ENCODE measurements at regions of chr19 and their contacts with region 1.

Region 1: GRCh38 chr19:55301459-55302317 is 17.9 kb downstream of the BRSK1 start:
- DNase-seq: peak; percentile 89 to 99 (median 94)
- ATAC-seq: peak; percentile 88
- H3K4me3 ChIP-seq: peak overlapping the region; percentile 46 to 83
- H3K4me3 Mint-ChIP-seq: peak overlapping the region; percentile 85
- H3K27ac ChIP-seq: peak overlapping the region; percentile 48 to 54
- H3K27ac Mint-ChIP-seq: peak overlapping the region; percentile 92
- H3K4me1 ChIP-seq: peaks cover 11% of the 10 kb centered on the region
- H3K4me1 Mint-ChIP-seq: peaks cover 12% of the 10 kb centered on the region
- H3K27me3 ChIP-seq: no peaks in the 10 kb centered on the region
- H3K27me3 Mint-ChIP-seq: no peaks in the 10 kb centered on the region
- CTCF ChIP-seq: peak; percentile 89

Region 2: DNA sequence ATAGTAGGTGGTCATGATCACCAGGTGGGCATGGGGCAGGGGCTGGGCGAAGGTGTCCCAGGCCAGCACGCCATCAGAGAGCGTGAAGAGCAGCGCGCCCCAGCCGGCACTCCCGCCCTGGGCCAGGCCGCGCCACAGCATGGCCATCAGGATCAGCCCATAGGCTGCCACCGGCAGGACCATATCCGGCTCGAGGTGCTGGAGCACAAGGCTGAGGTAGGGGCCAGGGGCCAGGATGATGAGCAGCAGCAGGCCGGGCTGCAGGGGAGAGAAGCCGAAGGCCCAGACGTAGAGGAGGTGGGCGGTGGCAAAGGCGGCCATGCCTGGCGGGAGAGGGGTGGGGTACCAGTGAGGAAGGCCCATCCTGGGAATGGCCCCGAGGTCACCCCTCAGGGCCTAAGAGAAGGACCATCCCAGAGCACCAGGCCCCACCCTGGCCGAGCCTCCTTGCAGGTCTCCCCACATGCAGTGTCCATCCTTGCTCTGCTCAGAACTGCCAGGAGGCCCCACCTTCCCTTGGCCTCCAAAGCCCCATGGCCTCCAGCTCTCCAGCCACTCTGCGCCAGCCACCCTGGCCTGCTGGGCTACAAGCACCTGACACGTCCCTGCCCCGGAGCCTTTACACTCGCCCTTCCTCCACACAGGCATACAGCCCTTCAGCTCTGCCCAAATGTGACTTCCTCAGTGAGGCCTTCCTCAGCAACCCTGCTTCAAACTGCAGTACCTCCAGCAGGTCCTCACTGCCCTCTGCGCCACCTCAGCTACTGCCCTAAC is 74.3 kb before region 1 on chr19:
- CTCF ChIA-PET with region 1: no interaction called
- POLR2A ChIA-PET with region 1: no interaction called
- intact Hi-C with region 1: no loop called
- DNase-seq: no peak
- ATAC-seq: no peak
- H3K4me3 ChIP-seq: no peak overlapping the region
- H3K4me3 Mint-ChIP-seq: no peak overlapping the region
- H3K27ac ChIP-seq: no peak overlapping the region
- H3K27ac Mint-ChIP-seq: no peak overlapping the region
- H3K4me1 ChIP-seq: no peaks in the 10 kb centered on the region
- H3K4me1 Mint-ChIP-seq: peaks cover 5% of the 10 kb centered on the region
- H3K27me3 ChIP-seq: no peaks in the 10 kb centered on the region
- H3K27me3 Mint-ChIP-seq: no peaks in the 10 kb centered on the region
- CTCF ChIP-seq: no peak

Region 3: GRCh38 chr19:55279770-55280643 is 21.7 kb before region 1 on chr19 and contains the start of gene HSPBP1:
- CTCF ChIA-PET with region 1: interaction called, 13 read pairs
- POLR2A ChIA-PET with region 1: no interaction called
- intact Hi-C with region 1: loop called in 1 of 2 experiments (anchors 2 kb)
- DNase-seq: peak; percentile 87 to 98 (median 95)
- ATAC-seq: peak; percentile 86
- H3K4me3 ChIP-seq: peak within 1 kb of the TSS; percentile 73 to 85
- H3K4me3 Mint-ChIP-seq: peak within 1 kb of the TSS; percentile 96
- H3K27ac ChIP-seq: peak within 1 kb of the TSS; percentile 89 to 90
- H3K27ac Mint-ChIP-seq: peak within 1 kb of the TSS; percentile 98
- H3K4me1 ChIP-seq: peaks cover 32% of the 10 kb centered on the region
- H3K4me1 Mint-ChIP-seq: peaks cover 44% of the 10 kb centered on the region
- H3K27me3 ChIP-seq: no peaks in the 10 kb centered on the region
- H3K27me3 Mint-ChIP-seq: no peaks in the 10 kb centered on the region
- CTCF ChIP-seq: no peak
- total RNA-seq, gene HSPBP1: 18.8 to 18.9 TPM

Region 4: DNA sequence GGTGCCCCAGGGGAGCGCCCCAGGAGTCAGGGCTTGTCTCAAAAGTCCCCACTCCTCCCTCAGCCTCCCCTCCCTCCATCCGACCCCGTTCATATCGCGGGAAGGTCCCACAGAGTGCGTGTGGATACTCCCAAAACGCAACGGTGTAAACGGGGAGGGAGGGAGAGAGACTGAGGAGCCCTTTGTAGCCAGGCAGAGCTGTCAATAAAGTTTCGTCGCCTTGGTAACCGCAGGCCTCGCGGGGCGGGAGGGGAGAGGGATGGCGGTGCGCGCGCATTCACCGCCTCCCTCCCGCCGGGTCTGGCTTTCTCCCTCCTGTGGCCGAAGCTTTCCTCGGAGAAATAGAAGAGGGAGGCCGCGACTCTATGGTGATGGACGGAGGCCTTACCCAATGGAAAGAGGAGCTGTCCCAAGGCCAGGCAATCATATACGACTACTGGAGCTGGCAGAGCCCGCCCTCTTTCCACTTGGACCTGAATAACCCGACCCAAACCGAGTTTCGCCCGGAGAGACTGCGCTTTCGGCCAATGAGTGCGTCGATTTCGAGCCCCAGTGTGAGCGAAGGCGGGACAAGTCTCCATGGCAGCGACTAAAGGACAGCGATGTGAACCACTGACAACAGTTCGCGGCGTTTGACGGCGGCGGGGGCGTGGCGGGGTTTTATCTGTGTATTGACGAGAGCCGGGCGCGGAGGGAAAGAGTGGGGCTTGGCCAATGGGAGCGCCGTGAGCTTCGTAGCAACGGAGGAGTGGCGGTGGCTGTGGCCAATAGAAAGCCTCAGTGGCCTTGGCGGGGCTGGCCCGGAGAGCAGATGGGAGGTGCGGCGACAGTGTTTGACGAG is 37.6 kb after region 1 on chr19 and contains the start of gene KMT5C:
- CTCF ChIA-PET with region 1: interaction called, 7 read pairs
- POLR2A ChIA-PET with region 1: interaction called, 12 read pairs
- intact Hi-C with region 1: loop called (anchors 1 to 2 kb)
- DNase-seq: peak; percentile 100
- ATAC-seq: peak; percentile 75
- H3K4me3 ChIP-seq: peak within 1 kb of the TSS; percentile 67 to 80
- H3K4me3 Mint-ChIP-seq: peak within 1 kb of the TSS; percentile 94
- H3K27ac ChIP-seq: peak within 1 kb of the TSS; percentile 94 to 100
- H3K27ac Mint-ChIP-seq: peak within 1 kb of the TSS; percentile 95
- H3K4me1 ChIP-seq: peaks cover 24% of the 10 kb centered on the region
- H3K4me1 Mint-ChIP-seq: peaks cover 20% of the 10 kb centered on the region
- H3K27me3 ChIP-seq: peaks cover 0 to 6% of the 10 kb centered on the region in 2 experiments
- H3K27me3 Mint-ChIP-seq: peaks cover 6% of the 10 kb centered on the region
- CTCF ChIP-seq: no peak
- total RNA-seq, gene KMT5C: 82.0 to 84.4 TPM

Region 5: GRCh38 chr19:55369671-55370304 is 68.1 kb after region 1 on chr19:
- CTCF ChIA-PET with region 1: no interaction called
- POLR2A ChIA-PET with region 1: no interaction called
- intact Hi-C with region 1: no loop called
- DNase-seq: peak in 4 of 9 experiments; percentile 37 to 55 (median 48)
- ATAC-seq: peak; percentile 63
- H3K4me3 ChIP-seq: peak overlapping the region in 1 of 2 experiments; percentile 28
- H3K4me3 Mint-ChIP-seq: peak overlapping the region; percentile 78
- H3K27ac ChIP-seq: no peak overlapping the region
- H3K27ac Mint-ChIP-seq: no peak overlapping the region
- H3K4me1 ChIP-seq: peaks cover 5% of the 10 kb centered on the region
- H3K4me1 Mint-ChIP-seq: peaks cover 10% of the 10 kb centered on the region
- H3K27me3 ChIP-seq: peaks cover 37 to 46% of the 10 kb centered on the region in 2 experiments
- H3K27me3 Mint-ChIP-seq: peaks cover 32% of the 10 kb centered on the region
- CTCF ChIP-seq: no peak

Region 6: DNA sequence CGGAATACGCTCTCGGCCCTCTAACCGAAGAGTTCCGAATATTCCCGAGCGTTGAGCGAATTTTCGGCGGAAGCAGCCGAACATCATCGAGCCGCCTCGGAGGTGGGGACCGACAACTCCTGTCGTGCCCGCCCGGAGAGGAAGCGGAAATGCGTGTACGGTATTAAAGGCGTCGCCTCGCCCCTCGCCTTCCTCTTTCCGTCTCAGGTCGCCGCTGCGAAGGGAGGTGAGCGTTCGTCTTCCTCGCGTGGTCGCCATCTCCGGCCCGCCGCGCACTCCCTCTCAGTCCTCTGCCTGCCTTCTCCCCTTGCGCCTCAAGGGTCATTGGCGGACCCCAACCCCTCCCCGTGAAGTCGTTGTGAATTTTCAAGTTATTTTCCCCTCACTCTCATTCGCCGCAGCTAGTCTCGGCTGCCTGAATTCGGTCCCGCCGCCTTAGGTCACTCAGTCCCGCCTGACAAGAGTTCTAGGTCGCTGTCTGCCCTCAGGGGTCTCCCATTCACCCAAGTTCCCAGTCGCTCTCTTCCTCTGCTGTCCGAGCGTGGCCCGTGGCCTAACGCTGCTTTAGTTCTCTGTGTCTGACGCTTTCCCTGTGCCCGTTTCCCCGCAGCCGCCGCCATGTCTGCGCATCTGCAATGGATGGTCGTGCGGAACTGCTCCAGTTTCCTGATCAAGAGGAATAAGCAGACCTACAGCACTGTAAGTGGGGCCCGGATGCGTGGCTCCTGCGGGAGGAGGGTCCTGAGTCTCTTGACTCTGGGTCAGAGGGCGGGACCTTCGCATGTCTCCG is 84.2 kb after region 1 on chr19 and contains the start of gene RPL28:
- CTCF ChIA-PET with region 1: interaction called, 17 read pairs
- POLR2A ChIA-PET with region 1: interaction called, 23 read pairs
- intact Hi-C with region 1: loop called (anchors 1 kb)
- DNase-seq: peak; percentile 97 to 99 (median 99)
- ATAC-seq: peak; percentile 80
- H3K4me3 ChIP-seq: peak within 1 kb of the TSS; percentile 75 to 94
- H3K4me3 Mint-ChIP-seq: peak within 1 kb of the TSS; percentile 100
- H3K27ac ChIP-seq: peak within 1 kb of the TSS; percentile 95 to 97
- H3K27ac Mint-ChIP-seq: peak within 1 kb of the TSS; percentile 100
- H3K4me1 ChIP-seq: peaks cover 59% of the 10 kb centered on the region
- H3K4me1 Mint-ChIP-seq: peaks cover 75% of the 10 kb centered on the region
- H3K27me3 ChIP-seq: no peaks in the 10 kb centered on the region
- H3K27me3 Mint-ChIP-seq: no peaks in the 10 kb centered on the region
- CTCF ChIP-seq: no peak
- total RNA-seq, gene RPL28: 4,227 to 4,270 TPM

Region 7: DNA sequence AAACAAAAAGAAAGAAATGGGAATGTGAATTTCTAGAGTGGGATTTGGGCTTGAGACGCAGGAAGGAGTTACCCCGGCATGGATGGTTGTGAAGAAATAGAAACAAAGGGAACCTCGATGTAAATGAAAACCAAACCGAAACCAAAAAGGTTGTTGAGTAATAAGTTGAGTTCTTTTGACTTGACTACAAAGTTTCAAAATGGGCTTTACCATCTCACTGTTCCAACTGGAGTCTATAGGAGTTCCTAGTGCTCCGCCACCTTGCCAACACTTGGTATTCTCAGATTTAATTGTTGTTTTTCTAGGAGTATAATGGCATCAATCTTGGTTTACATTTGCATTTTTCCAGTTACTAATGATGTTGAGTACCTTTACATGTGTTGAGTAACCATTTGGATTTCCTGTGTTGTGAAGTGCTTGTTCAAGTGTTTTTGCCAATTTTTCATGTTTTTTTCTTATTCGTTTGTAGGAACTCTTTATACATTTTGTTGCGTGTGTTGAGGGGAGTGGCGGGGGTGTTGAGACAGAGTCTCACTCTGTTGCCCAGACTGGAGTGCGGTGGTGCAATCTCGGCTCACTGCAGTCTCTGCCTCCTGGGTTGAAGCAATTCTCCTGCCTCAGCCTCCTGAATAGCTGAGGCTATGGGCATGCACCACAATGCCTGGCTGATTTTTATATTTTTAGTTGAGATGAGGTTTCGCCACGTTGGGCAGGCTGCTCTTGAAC is 96.7 kb after region 1 on chr19:
- CTCF ChIA-PET with region 1: no interaction called
- POLR2A ChIA-PET with region 1: no interaction called
- intact Hi-C with region 1: no loop called
- DNase-seq: no peak
- ATAC-seq: no peak
- H3K4me3 ChIP-seq: no peak overlapping the region
- H3K4me3 Mint-ChIP-seq: no peak overlapping the region
- H3K27ac ChIP-seq: no peak overlapping the region
- H3K27ac Mint-ChIP-seq: no peak overlapping the region
- H3K4me1 ChIP-seq: no peaks in the 10 kb centered on the region
- H3K4me1 Mint-ChIP-seq: peaks cover 10% of the 10 kb centered on the region
- H3K27me3 ChIP-seq: no peaks in the 10 kb centered on the region
- H3K27me3 Mint-ChIP-seq: no peaks in the 10 kb centered on the region
- CTCF ChIP-seq: no peak

Region 8: GRCh38 chr19:55454787-55455243 is 153.1 kb after region 1 on chr19:
- CTCF ChIA-PET with region 1: interaction called, 6 read pairs
- POLR2A ChIA-PET with region 1: no interaction called
- intact Hi-C with region 1: loop called in 1 of 2 experiments (anchors 1 kb)
- DNase-seq: peak in 6 of 9 experiments; percentile 46 to 65 (median 56)
- ATAC-seq: peak; percentile 39
- H3K4me3 ChIP-seq: no peak overlapping the region
- H3K4me3 Mint-ChIP-seq: no peak overlapping the region
- H3K27ac ChIP-seq: no peak overlapping the region
- H3K27ac Mint-ChIP-seq: no peak overlapping the region
- H3K4me1 ChIP-seq: peaks cover 13% of the 10 kb centered on the region
- H3K4me1 Mint-ChIP-seq: peaks cover 20% of the 10 kb centered on the region
- H3K27me3 ChIP-seq: peaks cover 10 to 18% of the 10 kb centered on the region in 2 experiments
- H3K27me3 Mint-ChIP-seq: peaks cover 24% of the 10 kb centered on the region
- CTCF ChIP-seq: peak; percentile 55

Region 9: DNA sequence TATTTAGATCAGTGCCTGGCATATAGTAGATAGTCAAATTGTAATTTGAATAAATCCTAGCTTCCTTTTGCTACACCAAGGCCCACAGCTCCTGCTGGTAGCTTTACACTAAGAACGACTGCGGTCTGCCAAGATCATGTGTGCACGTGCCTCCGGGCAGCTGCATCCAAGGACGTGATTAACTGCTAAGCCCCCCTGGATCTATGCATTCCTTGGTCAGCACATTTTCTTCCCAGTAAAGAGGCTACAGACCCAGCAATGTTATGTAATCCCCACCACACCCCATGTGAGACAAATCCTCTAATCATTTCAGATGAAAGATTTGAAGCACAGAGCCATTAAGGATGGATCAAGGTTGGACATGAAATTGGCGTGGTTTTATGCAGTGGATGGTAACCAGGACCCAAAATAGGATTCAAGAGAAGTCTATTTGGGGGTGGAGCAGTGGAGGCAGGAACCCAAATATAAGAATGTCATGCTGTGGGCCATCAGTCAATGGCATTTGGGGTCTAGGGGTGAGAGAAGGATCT is 1604.0 kb after region 1 on chr19:
- CTCF ChIA-PET with region 1: no interaction called
- POLR2A ChIA-PET with region 1: no interaction called
- intact Hi-C with region 1: no loop called
- DNase-seq: no peak
- ATAC-seq: no peak
- H3K4me3 ChIP-seq: no peak overlapping the region
- H3K4me3 Mint-ChIP-seq: no peak overlapping the region
- H3K27ac ChIP-seq: no peak overlapping the region
- H3K27ac Mint-ChIP-seq: no peak overlapping the region
- H3K4me1 ChIP-seq: no peaks in the 10 kb centered on the region
- H3K4me1 Mint-ChIP-seq: no peaks in the 10 kb centered on the region
- H3K27me3 ChIP-seq: no peaks in the 10 kb centered on the region
- H3K27me3 Mint-ChIP-seq: no peaks in the 10 kb centered on the region
- CTCF ChIP-seq: no peak